Dorsolateral prefrontal cortex (tissue), 120 donors: ENCODE measurements at regions of chr11 and their contacts with region 1.

Region 1: DNA sequence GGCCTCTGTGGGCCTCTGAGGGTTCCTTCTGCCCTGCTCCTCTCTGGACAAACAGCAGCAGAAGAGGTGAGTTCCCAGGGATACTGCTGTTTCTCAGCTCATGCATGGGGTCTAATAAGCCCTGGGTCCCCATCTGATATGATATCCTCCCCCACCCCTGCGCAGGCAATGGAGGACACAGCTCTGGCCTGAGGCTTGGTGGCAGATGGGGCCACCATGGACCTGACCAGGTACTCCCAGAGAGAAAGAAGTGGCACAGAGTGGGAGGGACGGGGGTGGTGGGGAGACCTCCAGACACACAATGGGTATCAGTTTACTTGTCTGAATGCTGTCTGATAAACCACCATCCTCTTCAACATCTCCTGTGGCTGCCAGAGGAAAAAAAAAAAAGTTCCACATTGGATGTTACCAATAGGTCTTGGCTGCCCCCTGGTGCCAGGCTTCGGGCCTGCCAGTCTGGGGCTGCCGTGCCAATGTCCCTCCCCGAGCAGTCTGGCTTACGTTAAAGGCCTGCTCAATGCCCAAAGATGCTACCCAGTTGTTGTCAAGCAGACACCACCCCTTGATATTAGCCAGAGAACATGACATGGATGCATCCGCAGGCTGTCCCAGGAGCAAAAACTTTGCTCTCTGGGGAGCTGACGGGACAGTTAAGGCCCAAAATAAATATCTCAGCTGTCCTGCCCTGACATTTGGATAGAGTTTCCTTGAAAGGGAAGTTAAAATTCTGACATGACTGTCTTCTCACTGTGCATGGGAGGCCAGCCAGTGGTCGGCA is 27.9 kb upstream of the ABCC8 start:
- DNase-seq: peak; percentile 81 to 90 (median 86)
- H3K4me3 ChIP-seq: no peak overlapping the region
- H3K27ac ChIP-seq: peak overlapping the region in 1 of 59 donors; percentile 30
- H3K27me3 ChIP-seq: no peaks in the 10 kb centered on the region
- CTCF ChIP-seq: peak; percentile 74 to 99 (median 95)

Region 2: DNA sequence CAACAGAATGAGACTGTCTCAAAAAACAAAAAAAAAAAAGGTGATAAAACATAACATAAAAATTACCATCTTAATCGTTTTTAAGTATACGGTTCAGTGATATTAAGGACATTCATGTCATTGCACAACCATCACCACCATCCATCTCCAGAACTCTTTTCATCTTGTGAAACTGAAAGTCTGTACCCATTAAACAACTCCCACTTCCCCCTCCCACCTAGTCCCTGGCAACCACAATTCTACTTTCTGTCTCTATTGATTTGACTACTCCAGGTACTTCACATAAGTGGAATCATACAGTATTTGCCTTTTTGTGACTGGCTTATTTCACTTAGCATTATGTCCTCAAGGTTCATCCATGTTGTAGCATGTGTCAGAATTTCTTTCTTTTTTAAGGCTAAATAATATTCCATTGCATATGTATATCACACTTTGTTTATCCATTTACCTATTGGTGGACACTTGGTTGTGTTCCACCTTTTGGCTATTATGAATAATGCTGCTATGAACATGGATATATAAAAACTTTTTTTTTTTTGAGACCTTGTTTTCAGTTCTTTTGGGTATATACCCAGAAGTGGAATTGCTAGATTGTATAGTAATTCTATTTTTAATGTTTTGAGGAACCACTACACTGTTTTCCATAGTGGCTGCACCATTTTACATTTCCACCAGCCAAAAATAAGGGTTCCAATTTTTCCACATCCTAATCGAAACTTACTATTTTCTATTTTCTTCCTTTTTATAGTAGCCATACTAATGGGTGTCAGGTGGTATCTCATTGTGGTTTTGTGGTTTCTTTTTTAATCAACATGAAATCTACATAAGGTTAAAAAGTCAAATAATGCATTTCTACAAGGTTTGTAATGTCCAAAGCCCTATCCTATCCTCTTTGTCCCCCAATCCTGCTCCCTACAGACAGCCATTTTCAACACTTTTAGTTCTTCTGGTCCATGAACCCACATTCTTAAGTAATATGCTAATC is 273.4 kb before region 1 on chr11:
- intact Hi-C with region 1: loop called (anchors 5 to 10 kb)
- DNase-seq: no peak
- H3K4me3 ChIP-seq: no peak overlapping the region
- H3K27ac ChIP-seq: no peak overlapping the region
- H3K27me3 ChIP-seq: no peaks in the 10 kb centered on the region
- CTCF ChIP-seq: no peak

Region 3: DNA sequence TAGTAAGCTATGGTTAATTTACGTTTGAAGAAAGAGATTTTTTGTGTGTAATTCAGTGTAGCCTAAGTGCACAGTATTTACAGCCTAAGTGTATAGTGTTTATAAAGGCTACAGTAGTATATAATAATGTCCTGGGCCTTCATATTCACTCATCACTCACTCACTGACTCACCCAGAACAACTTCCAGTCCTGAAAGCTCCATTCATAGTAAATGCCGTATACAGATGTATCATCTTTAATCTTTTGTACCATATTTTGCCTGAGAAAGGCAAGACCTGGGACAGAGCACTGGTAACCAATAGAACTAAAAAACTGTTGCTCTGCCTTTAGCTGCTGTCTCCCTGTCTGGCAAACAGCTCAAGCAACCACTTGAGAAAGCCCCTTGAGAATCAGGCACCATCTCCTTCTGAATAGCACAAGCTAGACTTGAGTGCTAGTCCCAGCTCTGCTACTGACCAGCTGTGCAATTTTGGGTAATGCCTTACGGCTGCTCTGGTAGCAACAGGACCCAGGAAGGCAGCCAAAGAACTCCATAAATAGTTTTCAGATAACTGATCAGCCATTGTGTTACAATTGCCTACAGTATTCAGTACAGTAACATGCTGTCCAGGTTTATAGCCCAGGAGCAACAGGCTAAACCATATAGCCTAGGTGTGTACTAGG is 361.4 kb after region 1 on chr11:
- intact Hi-C with region 1: no loop called
- DNase-seq: no peak
- H3K4me3 ChIP-seq: no peak overlapping the region
- H3K27ac ChIP-seq: no peak overlapping the region
- H3K27me3 ChIP-seq: no peaks in the 10 kb centered on the region
- CTCF ChIP-seq: no peak